ENCODE measurements at regions of chr7 and their contacts with region 1.

Region 1: DNA sequence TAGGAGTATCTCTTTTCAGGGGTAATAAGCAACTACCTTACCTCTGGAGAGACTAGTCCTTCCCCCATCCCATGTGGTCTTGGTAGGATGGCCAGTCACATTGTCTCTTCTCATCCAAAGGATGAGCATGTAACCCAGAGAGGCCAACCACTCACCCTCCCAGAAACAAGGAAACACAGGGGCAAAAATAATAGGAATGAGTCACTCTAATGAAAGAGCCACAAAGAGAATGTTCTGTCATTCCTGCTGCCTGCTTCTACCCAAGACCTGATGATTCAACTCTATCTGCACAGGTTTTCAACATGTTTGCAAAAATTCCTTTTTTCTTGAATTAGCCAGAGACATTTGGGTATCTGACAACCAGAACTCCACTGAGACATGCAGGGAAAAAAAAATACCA is 99.3 kb upstream of the NFE2L3 start:
- DNase-seq: no peak
- CTCF ChIP-seq: no peak

Region 2: DNA sequence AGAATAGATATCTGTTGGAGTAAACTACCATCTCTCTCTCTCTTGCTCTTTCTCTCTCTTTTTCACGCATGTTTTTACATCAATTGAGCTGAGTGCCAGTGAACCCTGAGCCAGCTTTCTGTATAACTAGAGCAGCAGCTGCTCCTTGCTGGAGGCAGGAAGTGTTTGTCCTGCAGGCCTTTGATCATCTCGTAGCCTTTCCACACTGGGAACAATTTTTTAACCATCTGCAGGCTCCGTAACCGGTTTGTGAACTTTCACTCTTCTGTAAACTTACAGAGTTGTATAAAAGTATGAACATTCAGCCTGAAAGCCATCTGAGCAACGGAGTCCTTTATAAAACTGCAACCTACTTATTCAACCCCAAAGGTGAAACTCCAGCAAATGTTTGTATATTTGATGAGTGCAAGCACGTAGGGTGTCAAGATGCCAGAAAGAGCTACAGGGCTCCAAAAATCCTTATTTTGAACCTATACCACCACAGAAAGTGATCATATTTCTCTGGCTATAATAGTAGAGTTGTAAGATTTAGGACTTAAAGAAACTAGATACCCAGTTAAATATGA is 63.5 kb before region 1 on chr7:
- in situ Hi-C with region 1: loop called (anchors 10 kb)
- DNase-seq: no peak
- CTCF ChIP-seq: no peak